ENCODE measurements at regions of chr1 and their contacts with region 1.

Region 1: GRCh38 chr1:84506002-84506728 is at the starts of genes GNG5 and SPATA1:
- DNase-seq: peak; percentile 99
- ATAC-seq: peak; percentile 91
- H3K4me3 Mint-ChIP-seq: peak within 1 kb of the TSS; percentile 96
- H3K27ac Mint-ChIP-seq: peak within 1 kb of the TSS; percentile 100
- H3K4me1 Mint-ChIP-seq: peaks cover 29% of the 10 kb centered on the region
- H3K27me3 Mint-ChIP-seq: no peaks in the 10 kb centered on the region
- total RNA-seq, gene GNG5: 124 to 159 TPM
- total RNA-seq, gene SPATA1: 0.61 to 1.4 TPM

Region 2: GRCh38 chr1:84077476-84078107 is 428.6 kb before region 1 on chr1:
- CTCF ChIA-PET with region 1: no interaction called
- POLR2A ChIA-PET with region 1: no interaction called
- intact Hi-C with region 1: loop called in 1 of 2 experiments (anchors 1 kb)
- DNase-seq: peak; percentile 85
- ATAC-seq: peak; percentile 94
- H3K4me3 Mint-ChIP-seq: peak overlapping the region; percentile 79
- H3K27ac Mint-ChIP-seq: peak overlapping the region; percentile 58
- H3K4me1 Mint-ChIP-seq: peaks cover 6% of the 10 kb centered on the region
- H3K27me3 Mint-ChIP-seq: peaks cover 2% of the 10 kb centered on the region

Region 3: DNA sequence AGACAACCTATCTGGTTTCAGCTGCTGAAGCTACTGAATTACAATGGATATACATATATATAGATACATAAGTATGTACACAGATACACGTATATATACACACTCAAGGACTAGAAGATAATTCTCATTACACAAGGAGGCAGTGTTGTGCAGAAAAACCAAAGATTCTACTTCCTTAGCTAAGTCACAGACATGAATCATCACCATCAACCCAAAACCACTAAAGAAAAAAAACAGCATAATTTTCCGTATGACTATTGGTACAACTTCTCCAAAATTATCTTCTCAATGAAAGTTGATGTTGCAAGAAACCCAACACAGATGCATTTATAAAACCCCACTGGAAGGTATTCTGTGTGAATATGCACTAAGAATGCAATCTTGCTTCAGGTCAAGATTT is 63.9 kb before region 1 on chr1:
- CTCF ChIA-PET with region 1: interaction called, 4 read pairs
- POLR2A ChIA-PET with region 1: no interaction called
- intact Hi-C with region 1: loop called (anchors 1 kb)
- DNase-seq: no peak
- ATAC-seq: peak; percentile 99
- H3K4me3 Mint-ChIP-seq: no peak overlapping the region
- H3K27ac Mint-ChIP-seq: no peak overlapping the region
- H3K4me1 Mint-ChIP-seq: peaks cover 23% of the 10 kb centered on the region
- H3K27me3 Mint-ChIP-seq: peaks cover 5% of the 10 kb centered on the region

Region 4: GRCh38 chr1:84573967-84574842 is 68.0 kb after region 1 on chr1 and contains the start of gene CTBS:
- CTCF ChIA-PET with region 1: interaction called, 11 read pairs
- POLR2A ChIA-PET with region 1: interaction called, 20 read pairs
- intact Hi-C with region 1: loop called (anchors 1 kb)
- DNase-seq: peak; percentile 94
- ATAC-seq: peak; percentile 85
- H3K4me3 Mint-ChIP-seq: peak within 1 kb of the TSS; percentile 97
- H3K27ac Mint-ChIP-seq: peak within 1 kb of the TSS; percentile 99
- H3K4me1 Mint-ChIP-seq: peaks cover 45% of the 10 kb centered on the region
- H3K27me3 Mint-ChIP-seq: no peaks in the 10 kb centered on the region
- total RNA-seq, gene CTBS: 13.5 to 17.3 TPM

Region 5: GRCh38 chr1:84620720-84621313 is 114.7 kb after region 1 on chr1:
- CTCF ChIA-PET with region 1: interaction called, 10 read pairs
- POLR2A ChIA-PET with region 1: interaction called, 5 read pairs
- intact Hi-C with region 1: loop called (anchors 1 to 2 kb)
- DNase-seq: peak; percentile 91
- ATAC-seq: peak; percentile 90
- H3K4me3 Mint-ChIP-seq: peak overlapping the region; percentile 80
- H3K27ac Mint-ChIP-seq: peak overlapping the region; percentile 91
- H3K4me1 Mint-ChIP-seq: peaks cover 20% of the 10 kb centered on the region
- H3K27me3 Mint-ChIP-seq: no peaks in the 10 kb centered on the region

Region 6: DNA sequence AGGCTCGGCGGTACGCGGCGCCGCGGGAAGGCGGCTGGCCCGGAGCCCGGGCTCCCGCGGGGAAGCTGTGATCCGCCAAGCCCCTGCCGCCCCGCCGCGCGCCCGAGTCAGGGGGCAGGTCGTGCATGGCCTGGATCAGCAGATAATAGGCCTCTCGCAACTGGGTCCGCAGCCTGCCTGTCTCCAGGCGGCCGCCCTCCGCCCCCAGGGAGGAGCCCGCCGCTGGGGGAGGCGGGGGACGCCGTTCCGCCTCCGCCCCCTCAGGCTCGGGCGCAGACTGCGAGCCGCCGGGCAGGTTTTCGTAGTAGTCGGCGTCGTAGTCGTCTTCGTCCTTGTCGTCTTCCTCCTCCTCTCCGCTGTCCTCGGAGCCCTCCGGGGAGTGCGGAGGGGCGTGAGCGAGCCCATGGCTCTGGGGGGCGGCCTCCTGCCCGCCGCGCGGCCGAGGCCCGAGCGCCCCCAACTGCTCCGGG is 694.7 kb after region 1 on chr1 and contains the start of gene SYDE2:
- CTCF ChIA-PET with region 1: no interaction called
- POLR2A ChIA-PET with region 1: no interaction called
- intact Hi-C with region 1: loop called in 1 of 2 experiments (anchors 5 kb)
- DNase-seq: peak; percentile 79
- ATAC-seq: peak; percentile 76
- H3K4me3 Mint-ChIP-seq: peak within 1 kb of the TSS; percentile 90
- H3K27ac Mint-ChIP-seq: peak within 1 kb of the TSS; percentile 88
- H3K4me1 Mint-ChIP-seq: peaks cover 25% of the 10 kb centered on the region
- H3K27me3 Mint-ChIP-seq: peaks cover 12% of the 10 kb centered on the region
- total RNA-seq, gene SYDE2: 2.9 to 3.3 TPM